Activated B cell treated with CpG ODN at 0.5 μM for 24 hours (primary cell): ENCODE measurements at regions of chr3 and their contacts with region 1.

Region 1: GRCh38 chr3:112136959-112137693 is 4.1 kb upstream of the GCSAM start:
- DNase-seq: no peak
- ATAC-seq: no peak
- H3K4me3 Mint-ChIP-seq: peak overlapping the region; percentile 42
- H3K27ac Mint-ChIP-seq: peak overlapping the region; percentile 80
- H3K4me1 Mint-ChIP-seq: peaks cover 63% of the 10 kb centered on the region
- H3K27me3 Mint-ChIP-seq: no peaks in the 10 kb centered on the region
- CTCF ChIP-seq: no peak

Region 2: GRCh38 chr3:110932567-110932966 is 1204.6 kb before region 1 on chr3:
- CTCF ChIA-PET with region 1: no interaction called
- POLR2A ChIA-PET with region 1: no interaction called
- intact Hi-C with region 1: no loop called
- DNase-seq: no peak
- ATAC-seq: no peak
- H3K4me3 Mint-ChIP-seq: no peak overlapping the region
- H3K27ac Mint-ChIP-seq: no peak overlapping the region
- H3K4me1 Mint-ChIP-seq: no peaks in the 10 kb centered on the region
- H3K27me3 Mint-ChIP-seq: no peaks in the 10 kb centered on the region
- CTCF ChIP-seq: no peak

Region 3: GRCh38 chr3:111859974-111860859 is 276.9 kb before region 1 on chr3:
- CTCF ChIA-PET with region 1: no interaction called
- POLR2A ChIA-PET with region 1: no interaction called
- intact Hi-C with region 1: no loop called
- DNase-seq: peak; percentile 52
- ATAC-seq: peak; percentile 80
- H3K4me3 Mint-ChIP-seq: peak overlapping the region; percentile 91
- H3K27ac Mint-ChIP-seq: peak overlapping the region; percentile 87
- H3K4me1 Mint-ChIP-seq: peaks cover 18% of the 10 kb centered on the region
- H3K27me3 Mint-ChIP-seq: peaks cover 9% of the 10 kb centered on the region
- CTCF ChIP-seq: no peak

Region 4: DNA sequence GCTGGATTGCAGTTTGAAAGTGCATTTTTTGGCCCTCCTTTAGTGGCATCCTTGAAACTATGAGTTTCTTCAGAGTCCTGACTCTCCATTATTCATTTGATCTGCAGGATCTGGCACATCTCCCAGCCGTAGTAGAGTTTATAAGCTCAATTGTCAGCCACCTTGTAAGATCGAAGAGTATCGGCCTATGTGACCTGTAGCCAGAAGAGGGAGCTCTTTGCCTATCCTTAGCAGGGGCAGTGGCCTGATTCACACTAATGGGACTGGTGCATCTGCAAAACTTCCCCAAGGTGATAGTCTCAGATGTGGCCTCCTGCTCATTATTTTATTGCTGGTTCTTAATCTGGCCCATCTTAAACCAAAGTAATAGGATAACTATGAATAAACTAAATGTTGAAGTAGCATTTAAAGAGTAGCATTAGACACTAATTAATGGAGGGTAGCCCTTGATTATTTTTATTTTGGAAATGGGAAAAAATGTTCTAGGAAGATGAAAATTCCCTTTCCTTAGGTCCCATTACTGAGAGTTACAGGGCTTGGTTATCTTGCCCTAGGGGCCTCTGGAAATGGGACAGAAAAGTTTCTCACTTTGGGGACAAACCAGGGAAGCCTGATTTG is 25.2 kb before region 1 on chr3:
- CTCF ChIA-PET with region 1: interaction called, 64 read pairs
- POLR2A ChIA-PET with region 1: interaction called, 25 read pairs
- intact Hi-C with region 1: loop called (anchors 1 kb)
- DNase-seq: no peak
- ATAC-seq: peak; percentile 79
- H3K4me3 Mint-ChIP-seq: no peak overlapping the region
- H3K27ac Mint-ChIP-seq: no peak overlapping the region
- H3K4me1 Mint-ChIP-seq: peaks cover 53% of the 10 kb centered on the region
- H3K27me3 Mint-ChIP-seq: no peaks in the 10 kb centered on the region
- CTCF ChIP-seq: peak; percentile 68

Region 5: DNA sequence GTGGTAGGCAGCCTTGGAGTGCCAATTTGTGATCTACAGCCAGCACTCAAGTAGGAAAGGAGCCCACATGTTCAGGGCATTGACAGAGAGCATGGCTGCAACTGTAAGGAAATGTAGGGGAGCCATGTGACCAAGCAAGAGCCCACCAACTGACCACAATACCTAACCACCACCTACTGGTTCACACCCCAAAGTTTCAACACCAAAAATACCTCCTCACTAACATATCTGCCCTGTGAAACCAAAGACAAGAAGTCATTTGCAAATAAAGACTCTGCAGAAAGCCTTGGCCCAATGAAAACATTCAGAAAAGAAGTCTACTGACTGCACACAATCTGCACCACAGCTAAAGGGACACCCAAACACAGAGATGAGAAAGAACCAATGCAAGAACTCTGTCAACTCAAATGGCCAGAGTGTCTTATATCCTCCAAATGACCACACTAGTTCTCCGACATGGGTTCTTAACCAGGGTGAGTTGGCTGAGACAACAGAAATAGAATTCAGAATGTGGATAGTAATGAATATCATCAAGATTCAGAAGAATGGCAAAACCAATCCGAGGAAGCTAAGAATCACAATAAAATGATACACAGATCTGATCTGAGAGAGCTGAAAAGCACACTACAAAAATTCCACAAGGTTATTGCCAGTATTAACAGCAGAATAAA is 116.3 kb after region 1 on chr3:
- CTCF ChIA-PET with region 1: no interaction called
- POLR2A ChIA-PET with region 1: no interaction called
- intact Hi-C with region 1: no loop called
- DNase-seq: no peak
- ATAC-seq: no peak
- H3K4me3 Mint-ChIP-seq: no peak overlapping the region
- H3K27ac Mint-ChIP-seq: no peak overlapping the region
- H3K4me1 Mint-ChIP-seq: no peaks in the 10 kb centered on the region
- H3K27me3 Mint-ChIP-seq: no peaks in the 10 kb centered on the region
- CTCF ChIP-seq: no peak

Region 6: DNA sequence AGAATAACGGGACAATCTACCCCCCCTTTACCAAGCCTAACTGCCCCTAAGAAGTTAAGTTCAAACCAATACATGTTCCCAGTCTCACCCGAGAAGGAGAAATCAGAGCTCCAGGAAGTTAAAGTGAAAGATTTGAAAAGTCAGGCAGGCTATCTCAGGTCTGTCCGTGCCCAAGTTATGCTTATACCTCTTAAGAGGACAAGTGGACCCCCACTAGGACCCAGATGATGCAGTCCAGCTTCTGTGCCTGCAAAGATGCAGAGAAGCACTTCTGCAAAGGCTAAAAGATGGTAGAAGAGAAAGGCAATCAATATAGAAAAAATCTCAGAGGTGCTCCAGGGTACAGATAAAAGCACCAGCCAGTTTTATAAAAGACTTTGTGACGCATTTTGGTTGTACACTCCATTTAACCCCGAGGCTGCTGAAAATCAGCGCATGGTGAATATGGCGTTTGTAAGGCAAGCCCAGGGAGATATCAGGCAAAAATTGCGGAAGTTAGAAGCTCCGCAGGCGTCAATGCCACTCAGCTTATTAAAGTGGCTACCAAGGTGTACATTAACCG is 166.7 kb after region 1 on chr3:
- CTCF ChIA-PET with region 1: interaction called, 3 read pairs
- POLR2A ChIA-PET with region 1: interaction called, 4 read pairs
- intact Hi-C with region 1: loop called (anchors 1 kb)
- DNase-seq: peak; percentile 20
- ATAC-seq: peak; percentile 88
- H3K4me3 Mint-ChIP-seq: no peak overlapping the region
- H3K27ac Mint-ChIP-seq: no peak overlapping the region
- H3K4me1 Mint-ChIP-seq: peaks cover 7% of the 10 kb centered on the region
- H3K27me3 Mint-ChIP-seq: no peaks in the 10 kb centered on the region
- CTCF ChIP-seq: no peak

Region 7: GRCh38 chr3:112437146-112438022 is 300.3 kb after region 1 on chr3:
- CTCF ChIA-PET with region 1: interaction called, 11 read pairs
- POLR2A ChIA-PET with region 1: no interaction called
- intact Hi-C with region 1: loop called (anchors 1 kb)
- DNase-seq: no peak
- ATAC-seq: peak; percentile 84
- H3K4me3 Mint-ChIP-seq: no peak overlapping the region
- H3K27ac Mint-ChIP-seq: no peak overlapping the region
- H3K4me1 Mint-ChIP-seq: peaks cover 58% of the 10 kb centered on the region
- H3K27me3 Mint-ChIP-seq: no peaks in the 10 kb centered on the region
- CTCF ChIP-seq: no peak

Region 8: GRCh38 chr3:112531358-112531781 is 394.2 kb after region 1 on chr3:
- CTCF ChIA-PET with region 1: interaction called, 9 read pairs
- POLR2A ChIA-PET with region 1: no interaction called
- intact Hi-C with region 1: loop called (anchors 1 kb)
- DNase-seq: no peak
- ATAC-seq: no peak
- H3K4me3 Mint-ChIP-seq: no peak overlapping the region
- H3K27ac Mint-ChIP-seq: peak overlapping the region; percentile 27
- H3K4me1 Mint-ChIP-seq: peaks cover 3% of the 10 kb centered on the region
- H3K27me3 Mint-ChIP-seq: no peaks in the 10 kb centered on the region
- CTCF ChIP-seq: peak; percentile 9

Region 9: DNA sequence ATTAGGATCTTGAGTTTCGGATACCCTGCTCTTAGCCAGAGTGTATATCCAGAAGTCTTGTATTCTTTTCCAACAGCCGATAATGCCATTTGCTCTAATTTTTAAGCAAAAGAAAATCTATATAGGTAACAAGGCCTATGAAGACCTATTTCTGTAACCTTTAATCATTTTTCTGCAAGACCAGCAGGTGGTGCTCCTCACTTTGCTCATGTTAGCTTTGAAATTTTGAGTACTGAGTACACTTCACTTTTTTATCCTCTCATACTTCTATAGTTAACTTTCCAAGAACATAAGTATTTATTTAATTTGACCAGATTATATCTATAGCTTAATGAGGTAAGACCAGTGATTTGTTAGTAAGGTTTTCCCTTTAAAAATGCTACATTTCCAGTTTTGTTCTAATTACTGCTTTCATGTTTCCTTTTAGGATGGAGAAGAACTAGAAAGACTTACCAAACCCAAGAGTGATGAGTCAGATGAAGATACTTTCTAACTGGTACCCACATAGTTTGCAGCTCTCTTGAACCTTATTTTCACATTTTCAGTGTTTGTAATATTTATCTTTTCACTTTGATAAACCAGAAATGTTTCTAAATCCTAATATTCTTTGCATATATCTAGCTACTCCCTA is 445.2 kb after region 1 on chr3:
- CTCF ChIA-PET with region 1: no interaction called
- POLR2A ChIA-PET with region 1: no interaction called
- intact Hi-C with region 1: no loop called
- DNase-seq: no peak
- ATAC-seq: no peak
- H3K4me3 Mint-ChIP-seq: no peak overlapping the region
- H3K27ac Mint-ChIP-seq: no peak overlapping the region
- H3K4me1 Mint-ChIP-seq: peaks cover 42% of the 10 kb centered on the region
- H3K27me3 Mint-ChIP-seq: no peaks in the 10 kb centered on the region
- CTCF ChIP-seq: peak; percentile 59

Region 10: GRCh38 chr3:112979240-112979832 is 842.2 kb after region 1 on chr3:
- CTCF ChIA-PET with region 1: no interaction called
- POLR2A ChIA-PET with region 1: no interaction called
- intact Hi-C with region 1: loop called (anchors 5 kb)
- DNase-seq: no peak
- ATAC-seq: no peak
- H3K4me3 Mint-ChIP-seq: no peak overlapping the region
- H3K27ac Mint-ChIP-seq: no peak overlapping the region
- H3K4me1 Mint-ChIP-seq: peaks cover 81% of the 10 kb centered on the region
- H3K27me3 Mint-ChIP-seq: no peaks in the 10 kb centered on the region
- CTCF ChIP-seq: peak; percentile 31